Activated CD4-positive, alpha-beta memory T cell treated with anti-CD3 and anti-CD28 coated beads for 36 hours (primary cell): ENCODE measurements at regions of chr9 and their contacts with region 1.

Region 1: DNA sequence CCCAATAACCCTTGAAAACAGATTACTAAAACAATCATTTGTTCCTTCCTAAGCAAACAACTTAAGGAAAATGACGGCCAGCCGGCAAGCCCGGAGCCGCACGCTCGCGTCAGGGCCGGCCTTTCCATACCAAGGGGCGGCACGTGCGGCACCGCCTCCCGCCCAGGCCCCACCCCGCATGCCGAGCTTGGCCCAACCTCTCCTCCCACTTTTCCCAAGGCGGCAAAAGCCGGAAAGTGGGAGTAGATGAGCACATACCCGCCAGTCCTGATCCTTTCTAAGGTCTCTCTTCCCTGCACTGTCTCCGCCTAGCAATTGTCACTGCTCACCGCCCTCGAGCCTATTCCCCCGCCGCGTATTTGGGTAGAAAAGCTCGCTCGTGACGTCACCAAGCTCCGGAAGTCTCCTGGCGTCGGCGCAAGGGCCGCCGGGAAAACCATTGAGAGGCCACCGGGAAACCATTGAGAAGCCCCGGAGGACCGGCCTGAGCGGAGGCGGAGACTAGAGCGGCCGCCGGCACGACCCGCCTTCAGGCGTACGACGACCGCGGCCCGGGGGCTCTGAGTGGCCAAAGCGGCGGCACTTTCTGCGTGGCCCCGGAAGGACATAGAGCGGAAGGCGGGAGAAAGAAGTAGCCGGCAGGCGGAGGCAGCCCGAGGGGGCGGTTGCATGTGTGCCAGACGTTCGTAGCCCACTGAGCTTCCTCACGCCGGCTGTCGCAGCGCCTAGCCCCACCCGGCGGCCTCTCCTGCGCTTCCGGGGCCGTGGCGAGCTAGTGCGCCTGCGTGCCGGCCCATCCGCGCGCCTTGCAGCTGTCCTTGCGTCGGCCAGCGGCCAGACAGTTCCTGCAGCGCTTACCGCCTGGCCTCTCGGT is at the starts of genes NCBP1 and TSTD2:
- DNase-seq: peak; percentile 98
- H3K4me3 Mint-ChIP-seq: peak within 1 kb of the TSS; percentile 86
- H3K27ac Mint-ChIP-seq: peak within 1 kb of the TSS; percentile 97
- H3K4me1 Mint-ChIP-seq: peaks cover 50% of the 10 kb centered on the region
- H3K27me3 Mint-ChIP-seq: no peaks in the 10 kb centered on the region
- total RNA-seq, gene NCBP1: 43.4 to 47.2 TPM
- total RNA-seq, gene TSTD2: 10.3 to 13.4 TPM

Region 2: GRCh38 chr9:95875305-95876137 is 1757.7 kb before region 1 on chr9 and contains the start of gene ERCC6L2:
- CTCF ChIA-PET with region 1: no interaction called
- POLR2A ChIA-PET with region 1: no interaction called
- intact Hi-C with region 1: loop called (anchors 5 kb)
- DNase-seq: peak; percentile 97
- H3K4me3 Mint-ChIP-seq: no peak within 1 kb of the TSS
- H3K27ac Mint-ChIP-seq: no peak within 1 kb of the TSS
- H3K4me1 Mint-ChIP-seq: peaks cover 28% of the 10 kb centered on the region
- H3K27me3 Mint-ChIP-seq: no peaks in the 10 kb centered on the region
- total RNA-seq, gene ERCC6L2: 23.1 to 25.1 TPM

Region 3: DNA sequence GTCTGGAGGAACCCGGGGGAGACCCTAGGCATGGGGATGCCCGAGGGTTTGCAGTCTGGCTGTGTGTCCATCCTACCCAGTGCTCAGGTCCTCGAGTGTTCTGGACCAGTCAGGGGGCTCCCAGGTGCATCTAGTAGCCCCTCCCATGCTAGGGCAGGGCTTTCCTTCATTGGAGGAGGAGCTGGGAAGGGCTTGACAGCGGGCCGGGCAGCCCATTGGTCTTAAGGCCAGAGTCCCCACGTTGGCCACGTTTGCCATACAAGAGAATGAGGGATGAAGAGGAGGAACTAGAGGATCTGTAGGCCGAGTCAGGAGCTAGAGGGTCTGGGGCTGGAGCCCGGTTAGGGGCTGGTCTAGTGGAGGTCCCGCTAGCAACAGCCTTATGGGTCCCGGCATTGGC is 557.0 kb before region 1 on chr9:
- CTCF ChIA-PET with region 1: no interaction called
- POLR2A ChIA-PET with region 1: no interaction called
- intact Hi-C with region 1: no loop called
- DNase-seq: no peak
- H3K4me3 Mint-ChIP-seq: no peak overlapping the region
- H3K27ac Mint-ChIP-seq: no peak overlapping the region
- H3K4me1 Mint-ChIP-seq: no peaks in the 10 kb centered on the region
- H3K27me3 Mint-ChIP-seq: peaks cover 52% of the 10 kb centered on the region

Region 4: GRCh38 chr9:97237951-97238851 is 395.0 kb before region 1 on chr9:
- CTCF ChIA-PET with region 1: no interaction called
- POLR2A ChIA-PET with region 1: no interaction called
- intact Hi-C with region 1: loop called (anchors 1 kb)
- DNase-seq: peak; percentile 88
- H3K4me3 Mint-ChIP-seq: peak overlapping the region; percentile 95
- H3K27ac Mint-ChIP-seq: peak overlapping the region; percentile 91
- H3K4me1 Mint-ChIP-seq: peaks cover 16% of the 10 kb centered on the region
- H3K27me3 Mint-ChIP-seq: no peaks in the 10 kb centered on the region

Region 5: GRCh38 chr9:97397220-97397619 is 236.0 kb before region 1 on chr9:
- CTCF ChIA-PET with region 1: no interaction called
- POLR2A ChIA-PET with region 1: no interaction called
- intact Hi-C with region 1: no loop called
- DNase-seq: peak; percentile 73
- H3K4me3 Mint-ChIP-seq: no peak overlapping the region
- H3K27ac Mint-ChIP-seq: no peak overlapping the region
- H3K4me1 Mint-ChIP-seq: peaks cover 17% of the 10 kb centered on the region
- H3K27me3 Mint-ChIP-seq: peaks cover 2% of the 10 kb centered on the region

Region 6: GRCh38 chr9:97615439-97616072 is 17.7 kb before region 1 on chr9:
- CTCF ChIA-PET with region 1: interaction called, 28 read pairs
- POLR2A ChIA-PET with region 1: interaction called, 6 read pairs
- intact Hi-C with region 1: no loop called
- DNase-seq: peak; percentile 64
- H3K4me3 Mint-ChIP-seq: no peak overlapping the region
- H3K27ac Mint-ChIP-seq: no peak overlapping the region
- H3K4me1 Mint-ChIP-seq: peaks cover 12% of the 10 kb centered on the region
- H3K27me3 Mint-ChIP-seq: no peaks in the 10 kb centered on the region

Region 7: DNA sequence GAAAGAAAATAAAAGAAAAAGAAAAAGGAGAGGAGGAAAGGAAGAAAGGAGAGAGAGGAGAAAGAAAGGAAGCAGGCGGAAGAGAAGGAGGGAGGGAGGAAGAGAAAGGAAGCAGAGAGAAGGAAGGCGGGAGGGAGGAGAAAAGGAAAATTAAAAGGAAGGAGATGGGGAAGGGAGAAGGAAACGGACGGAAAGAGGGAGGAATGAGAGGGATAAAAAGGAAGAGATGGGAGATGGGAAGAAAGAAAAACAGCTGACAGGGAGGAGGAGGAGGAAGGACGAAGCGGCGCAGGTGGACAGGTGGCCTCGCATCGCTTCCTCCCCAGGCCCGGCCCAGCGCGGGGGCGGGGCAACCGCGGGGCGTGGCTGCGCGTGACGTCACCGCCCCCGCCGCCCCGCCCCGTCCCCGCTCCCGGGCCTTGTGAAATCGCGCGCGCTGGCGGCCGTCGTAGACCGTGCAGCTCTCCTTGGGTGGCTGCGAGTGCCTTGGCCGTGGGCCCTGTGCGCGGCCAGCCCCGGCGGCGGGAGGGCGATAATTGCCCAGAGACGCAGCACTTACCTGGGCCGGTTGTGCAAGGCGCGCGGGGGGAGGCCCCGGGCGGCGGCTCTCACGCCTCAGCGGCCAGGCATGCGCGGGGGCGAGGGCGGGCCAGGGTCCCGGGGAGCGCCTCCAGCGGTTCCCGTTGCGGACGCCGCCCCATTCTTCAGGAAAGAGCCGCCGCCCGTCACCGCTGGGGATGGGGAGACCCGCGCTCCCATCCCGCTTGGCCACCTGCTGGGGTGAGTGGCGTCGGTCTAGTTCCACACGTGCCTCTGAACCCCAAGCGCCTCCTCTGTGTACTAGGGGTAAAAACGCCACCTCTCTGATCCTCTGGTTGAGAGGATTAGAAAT is 170.2 kb after region 1 on chr9:
- CTCF ChIA-PET with region 1: no interaction called
- POLR2A ChIA-PET with region 1: no interaction called
- intact Hi-C with region 1: loop called (anchors 10 kb)
- DNase-seq: peak; percentile 75
- H3K4me3 Mint-ChIP-seq: peak overlapping the region; percentile 70
- H3K27ac Mint-ChIP-seq: no peak overlapping the region
- H3K4me1 Mint-ChIP-seq: peaks cover 3% of the 10 kb centered on the region
- H3K27me3 Mint-ChIP-seq: peaks cover 15% of the 10 kb centered on the region

Region 8: DNA sequence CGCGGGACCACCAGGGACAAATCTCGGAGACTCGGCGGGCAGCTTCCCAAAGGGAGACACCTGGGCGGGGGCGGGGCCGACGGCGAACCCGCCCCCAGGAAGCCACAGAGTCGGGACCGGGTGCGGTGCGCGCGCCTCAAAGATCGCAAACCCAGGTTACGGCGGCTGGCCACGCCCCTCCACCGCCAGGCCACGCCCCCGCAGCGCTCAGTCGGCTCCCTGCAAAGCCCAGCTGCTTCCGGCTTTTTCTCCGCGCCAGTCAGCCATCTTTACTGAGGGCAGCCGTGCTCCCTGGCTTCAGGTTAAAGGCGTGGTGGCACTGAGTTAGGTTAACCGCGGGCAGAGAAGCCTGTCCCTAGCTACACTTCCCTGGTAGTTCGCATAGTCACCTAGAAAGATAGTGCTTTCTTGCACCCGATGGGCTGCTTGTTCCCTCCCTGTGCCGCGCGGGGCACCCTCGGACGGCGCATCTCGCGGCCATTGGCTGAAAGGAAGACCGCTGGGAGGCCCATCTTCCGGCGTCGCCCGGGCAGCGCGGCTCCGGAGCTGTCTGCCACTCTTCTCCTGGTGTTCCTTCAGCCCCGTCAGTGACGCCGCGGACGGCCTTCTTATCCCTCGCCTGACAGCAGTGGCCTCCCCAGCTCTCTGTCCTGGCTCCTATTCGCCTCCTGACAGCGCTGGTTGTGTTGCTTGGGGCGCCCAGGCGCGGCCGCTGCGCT is 622.5 kb after region 1 on chr9 and contains the start of gene TBC1D2:
- CTCF ChIA-PET with region 1: no interaction called
- POLR2A ChIA-PET with region 1: no interaction called
- intact Hi-C with region 1: loop called (anchors 1 kb)
- DNase-seq: peak; percentile 98
- H3K4me3 Mint-ChIP-seq: peak within 1 kb of the TSS; percentile 85
- H3K27ac Mint-ChIP-seq: peak within 1 kb of the TSS; percentile 95
- H3K4me1 Mint-ChIP-seq: peaks cover 32% of the 10 kb centered on the region
- H3K27me3 Mint-ChIP-seq: no peaks in the 10 kb centered on the region
- total RNA-seq, gene TBC1D2: 5.2 to 5.3 TPM